ENCODE measurements at regions of chr1 and their contacts with region 1.

Region 1: DNA sequence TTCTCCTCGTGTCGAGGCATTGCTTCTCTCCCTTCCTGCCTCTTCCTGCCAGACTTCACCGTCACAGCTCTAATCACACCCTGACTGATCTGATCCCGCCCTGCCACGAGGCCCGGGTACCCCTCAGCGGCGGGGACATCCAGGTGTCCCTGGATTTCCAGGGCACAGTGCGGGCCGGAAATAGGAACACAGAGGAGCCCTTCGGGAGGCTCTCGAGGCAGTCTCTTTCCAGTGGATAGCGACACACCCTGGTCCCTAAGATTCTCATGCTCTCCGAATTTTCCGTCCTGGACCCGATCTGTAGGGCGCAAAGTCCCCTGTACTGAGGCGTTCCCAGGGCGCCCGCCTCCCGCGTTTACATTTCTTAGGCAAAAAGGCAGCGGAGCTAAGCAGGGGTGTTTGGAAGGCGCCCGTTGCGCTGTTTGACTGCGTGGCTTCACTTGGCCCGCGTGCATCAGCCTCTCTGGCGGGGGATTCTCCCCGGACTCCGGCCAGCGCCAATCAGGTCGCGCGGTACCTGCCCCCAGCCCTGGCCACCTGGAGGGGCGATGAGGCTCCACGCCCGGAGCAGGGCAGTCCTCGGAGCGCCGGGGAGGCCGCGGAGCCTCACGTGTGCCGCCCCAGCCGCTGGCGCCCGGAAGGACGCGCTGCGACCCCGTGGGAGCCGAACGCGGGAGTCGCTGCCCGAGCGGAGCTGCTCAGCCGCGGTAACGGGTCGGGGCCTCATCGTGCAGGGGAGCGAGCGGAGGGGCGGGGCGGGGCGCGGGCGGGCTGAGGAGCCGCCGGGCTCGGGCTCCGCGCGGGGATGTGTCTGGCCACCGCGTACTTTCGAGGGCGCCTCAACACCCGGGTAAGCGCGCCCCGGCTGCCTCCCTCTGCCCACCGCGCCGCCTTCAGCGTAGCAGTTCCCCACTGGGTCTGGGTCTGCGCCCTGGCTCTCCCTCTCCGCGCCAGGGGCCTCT is at the start of gene FAM163A:
- DNase-seq: peak; percentile 85
- H3K4me3 ChIP-seq: peak within 1 kb of the TSS in 1 of 2 experiments; percentile 54; a peak in 2 of 4 replicates
- H3K27ac ChIP-seq: peak within 1 kb of the TSS in 1 of 2 experiments; percentile 99; a peak in 2 of 4 replicates
- H3K4me1 ChIP-seq: peaks cover 0 to 38% of the 10 kb centered on the region in 2 experiments; a peak in 2 of 4 replicates
- H3K27me3 ChIP-seq: peaks cover 41% of the 10 kb centered on the region
- CTCF ChIP-seq: no peak
- EP300 ChIP-seq: no peak
- RAD21 ChIP-seq: peak; percentile 24; the same call in 1 of the 2 replicates
- polyA plus RNA-seq, gene FAM163A: 0.43 and 1.1 TPM in 2 replicates

Region 2: GRCh38 chr1:179728271-179728670 is 14.7 kb before region 1 on chr1:
- CTCF ChIA-PET with region 1: interaction called, 12 read pairs
- POLR2A ChIA-PET with region 1: interaction called, 6 read pairs
- DNase-seq: peak; percentile 22
- H3K4me3 ChIP-seq: no peak overlapping the region
- H3K27ac ChIP-seq: peak overlapping the region in 1 of 2 experiments; percentile 32; a peak in 2 of 4 replicates
- H3K4me1 ChIP-seq: peaks cover 0 to 11% of the 10 kb centered on the region in 2 experiments; a peak in 1 of 4 replicates
- H3K27me3 ChIP-seq: peaks cover 11% of the 10 kb centered on the region; the same call in 1 of the 2 replicates
- CTCF ChIP-seq: no peak
- EP300 ChIP-seq: peak in 1 of 2 experiments; percentile 53; a peak in 2 of 4 replicates
- RAD21 ChIP-seq: no peak

Region 3: GRCh38 chr1:179761296-179761695 is 18.3 kb after region 1 on chr1:
- CTCF ChIA-PET with region 1: interaction called, 5 read pairs
- POLR2A ChIA-PET with region 1: interaction called, 14 read pairs
- DNase-seq: peak; percentile 40
- H3K4me3 ChIP-seq: no peak overlapping the region
- H3K27ac ChIP-seq: peak overlapping the region in 1 of 2 experiments; percentile 96; a peak in 3 of 4 replicates
- H3K4me1 ChIP-seq: peaks cover 0 to 83% of the 10 kb centered on the region in 2 experiments; a peak in 2 of 4 replicates
- H3K27me3 ChIP-seq: no peaks in the 10 kb centered on the region
- CTCF ChIP-seq: no peak
- EP300 ChIP-seq: peak in 1 of 2 experiments; percentile 72; a peak in 1 of 4 replicates
- RAD21 ChIP-seq: peak; percentile 2; the same call in 1 of the 2 replicates

Region 4: DNA sequence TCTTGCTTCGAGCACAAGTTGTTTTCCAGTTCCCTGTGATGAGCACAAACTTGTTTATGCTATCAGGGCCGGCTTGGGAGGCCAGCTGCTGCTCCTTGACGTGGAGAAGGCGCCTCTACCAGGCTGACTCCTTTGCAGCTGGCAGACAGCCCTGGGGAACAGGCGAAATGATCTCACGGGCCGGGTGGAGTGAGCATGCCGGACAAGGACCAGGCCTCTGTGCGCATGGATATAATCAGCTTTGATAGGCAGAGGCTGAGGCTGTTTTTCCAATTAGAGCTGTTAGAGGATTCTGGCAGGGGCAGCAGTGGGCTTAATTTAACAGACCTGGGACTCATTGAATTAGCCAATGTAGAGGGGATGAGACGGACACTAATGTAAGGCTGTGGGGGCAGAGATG is 39.0 kb after region 1 on chr1:
- CTCF ChIA-PET with region 1: interaction called, 3 read pairs
- POLR2A ChIA-PET with region 1: interaction called, 20 read pairs
- DNase-seq: peak; percentile 83
- H3K4me3 ChIP-seq: no peak overlapping the region
- H3K27ac ChIP-seq: peak overlapping the region in 1 of 2 experiments; percentile 94; a peak in 2 of 4 replicates
- H3K4me1 ChIP-seq: peaks cover 0 to 82% of the 10 kb centered on the region in 2 experiments; a peak in 2 of 4 replicates
- H3K27me3 ChIP-seq: peaks cover 16% of the 10 kb centered on the region; the same call in 1 of the 2 replicates
- CTCF ChIP-seq: no peak
- EP300 ChIP-seq: peak in 1 of 2 experiments; percentile 100; a peak in 2 of 4 replicates
- RAD21 ChIP-seq: peak; percentile 53

Region 5: DNA sequence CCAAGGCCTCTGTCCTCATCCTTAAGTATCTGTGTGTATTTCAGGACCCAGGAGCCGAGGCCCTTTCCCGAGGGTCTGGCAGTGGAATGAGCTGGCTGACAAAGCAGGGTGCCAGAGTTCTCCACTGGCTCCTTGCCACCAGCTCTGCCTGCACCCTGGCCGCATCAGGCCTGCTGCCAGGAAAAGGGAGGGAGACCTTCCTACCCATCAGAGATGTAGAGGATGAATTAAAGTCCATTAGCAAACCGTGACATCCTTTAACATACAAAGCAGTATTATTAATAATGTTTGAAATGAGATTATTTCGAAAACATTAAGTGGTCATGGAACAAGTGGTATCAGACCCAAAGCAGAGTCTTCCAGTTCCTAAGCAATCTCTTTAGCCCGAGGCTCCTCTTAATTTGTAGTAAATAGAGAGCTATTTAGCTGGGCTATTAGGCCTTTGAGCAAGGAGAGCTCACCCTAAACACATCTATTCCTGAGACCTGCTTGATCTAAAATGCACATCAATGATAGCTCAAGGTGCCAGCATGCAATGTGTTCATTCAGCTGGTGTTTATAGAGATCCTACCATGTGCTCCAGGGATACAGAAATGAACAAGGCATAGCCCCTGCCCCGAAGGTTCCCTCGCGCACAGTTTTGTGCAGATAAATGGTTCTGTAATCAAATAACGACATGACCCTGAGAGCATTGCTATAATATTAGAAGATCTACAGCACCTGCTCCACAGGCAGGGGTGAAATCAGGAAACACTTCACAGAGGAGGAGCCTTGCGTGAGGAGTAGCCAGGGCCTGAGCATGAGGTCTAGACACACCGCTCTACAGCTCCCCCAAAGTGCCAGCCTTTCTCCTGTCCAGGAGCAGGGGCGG is 44.1 kb after region 1 on chr1:
- CTCF ChIA-PET with region 1: interaction called, 3 read pairs
- POLR2A ChIA-PET with region 1: interaction called, 20 read pairs
- DNase-seq: peak; percentile 75
- H3K4me3 ChIP-seq: no peak overlapping the region
- H3K27ac ChIP-seq: peak overlapping the region; percentile 28 to 98; a peak in 3 of 4 replicates
- H3K4me1 ChIP-seq: peaks cover 0 to 85% of the 10 kb centered on the region in 2 experiments; a peak in 2 of 4 replicates
- H3K27me3 ChIP-seq: peaks cover 15% of the 10 kb centered on the region; the same call in 1 of the 2 replicates
- CTCF ChIP-seq: no peak
- EP300 ChIP-seq: peak in 1 of 2 experiments; percentile 75; a peak in 1 of 4 replicates
- RAD21 ChIP-seq: peak; percentile 30

Region 6: GRCh38 chr1:179794669-179795068 is 51.7 kb after region 1 on chr1:
- CTCF ChIA-PET with region 1: interaction called, 3 read pairs
- POLR2A ChIA-PET with region 1: interaction called, 10 read pairs
- DNase-seq: peak; percentile 60
- H3K4me3 ChIP-seq: no peak overlapping the region
- H3K27ac ChIP-seq: peak overlapping the region in 1 of 2 experiments; percentile 94; a peak in 2 of 4 replicates
- H3K4me1 ChIP-seq: peaks cover 0 to 79% of the 10 kb centered on the region in 2 experiments; a peak in 2 of 4 replicates
- H3K27me3 ChIP-seq: no peaks in the 10 kb centered on the region
- CTCF ChIP-seq: no peak
- EP300 ChIP-seq: peak in 1 of 2 experiments; percentile 89; a peak in 2 of 4 replicates
- RAD21 ChIP-seq: no peak; the same call in 1 of the 2 replicates